HCT116 (cell line): ENCODE measurements at regions of chr12 and their contacts with region 1.

Region 1: DNA sequence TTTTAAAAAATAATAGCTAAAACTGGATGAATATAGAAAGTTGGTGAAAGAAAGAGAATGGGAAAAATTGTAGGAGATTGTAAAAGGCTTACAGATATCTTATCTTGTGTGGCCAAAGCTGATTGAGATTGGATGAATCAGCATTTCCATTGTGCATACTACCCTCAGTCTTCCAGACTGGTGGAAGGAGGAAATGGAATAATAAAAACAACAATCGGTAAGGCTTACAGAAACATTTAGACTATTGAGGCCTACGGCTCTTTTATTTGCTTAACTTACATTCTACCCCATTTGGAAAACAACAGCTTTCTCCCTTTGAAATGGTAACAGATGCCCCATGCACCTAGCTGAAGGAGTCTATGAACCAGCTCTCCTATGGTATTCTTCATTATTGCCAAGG is 129.8 kb downstream of the PTPRB start:
- DNase-seq: no peak
- ATAC-seq: no peak
- H3K4me3 ChIP-seq: no peak overlapping the region
- H3K27ac ChIP-seq: no peak overlapping the region
- H3K4me1 ChIP-seq: no peaks in the 10 kb centered on the region
- H3K27me3 ChIP-seq: no peaks in the 10 kb centered on the region
- CTCF ChIP-seq: no peak
- POLR2A ChIP-seq: no peak
- RAD21 ChIP-seq: no peak

Region 2: GRCh38 chr12:70398862-70399261 is 108.6 kb before region 1 on chr12:
- CTCF ChIA-PET with region 1: no interaction called
- POLR2A ChIA-PET with region 1: no interaction called
- RAD21 ChIA-PET with region 1: interaction called in 1 of 2 experiments, 10 read pairs
- intact Hi-C with region 1: no loop called
- DNase-seq: no peak
- ATAC-seq: no peak
- H3K4me3 ChIP-seq: no peak overlapping the region
- H3K27ac ChIP-seq: no peak overlapping the region
- H3K4me1 ChIP-seq: peaks cover 0 to 5% of the 10 kb centered on the region in 2 experiments; a peak in 2 of 4 replicates
- H3K27me3 ChIP-seq: no peaks in the 10 kb centered on the region
- CTCF ChIP-seq: no peak
- POLR2A ChIP-seq: no peak
- RAD21 ChIP-seq: no peak

Region 3: GRCh38 chr12:70619471-70620152 is 112.2 kb after region 1 on chr12:
- CTCF ChIA-PET with region 1: no interaction called
- POLR2A ChIA-PET with region 1: no interaction called
- RAD21 ChIA-PET with region 1: no interaction called
- intact Hi-C with region 1: no loop called
- DNase-seq: no peak
- ATAC-seq: no peak
- H3K4me3 ChIP-seq: no peak overlapping the region
- H3K27ac ChIP-seq: no peak overlapping the region
- H3K4me1 ChIP-seq: no peaks in the 10 kb centered on the region
- H3K27me3 ChIP-seq: no peaks in the 10 kb centered on the region
- CTCF ChIP-seq: no peak
- POLR2A ChIP-seq: no peak
- RAD21 ChIP-seq: no peak

Region 4: GRCh38 chr12:70671698-70672097 is 164.3 kb after region 1 on chr12:
- CTCF ChIA-PET with region 1: no interaction called
- POLR2A ChIA-PET with region 1: no interaction called
- RAD21 ChIA-PET with region 1: no interaction called
- intact Hi-C with region 1: no loop called
- DNase-seq: no peak
- ATAC-seq: no peak
- H3K4me3 ChIP-seq: no peak overlapping the region
- H3K27ac ChIP-seq: no peak overlapping the region
- H3K4me1 ChIP-seq: no peaks in the 10 kb centered on the region
- H3K27me3 ChIP-seq: no peaks in the 10 kb centered on the region
- CTCF ChIP-seq: no peak
- POLR2A ChIP-seq: no peak
- RAD21 ChIP-seq: no peak